OCI-LY7 (cell line): ENCODE measurements at regions of chr13 and their contacts with region 1.

Region 1: GRCh38 chr13:99501184-99501847 is at the start of gene TM9SF2:
- DNase-seq: peak; percentile 91
- H3K4me3 ChIP-seq: peak within 1 kb of the TSS; percentile 97
- H3K27ac ChIP-seq: peak within 1 kb of the TSS; percentile 73
- H3K4me1 ChIP-seq: peaks cover 58% of the 10 kb centered on the region
- CTCF ChIP-seq: no peak
- total RNA-seq, gene TM9SF2: 16.3 and 17.8 TPM in 2 replicates

Region 2: GRCh38 chr13:98570929-98571372 is 930.4 kb before region 1 on chr13:
- CTCF ChIA-PET with region 1: no interaction called
- POLR2A ChIA-PET with region 1: no interaction called
- intact Hi-C with region 1: loop called (anchors 5 kb)
- DNase-seq: peak; percentile 87
- H3K4me3 ChIP-seq: peak overlapping the region; percentile 68
- H3K27ac ChIP-seq: peak overlapping the region; percentile 99
- H3K4me1 ChIP-seq: peaks cover 81% of the 10 kb centered on the region
- CTCF ChIP-seq: no peak

Region 3: GRCh38 chr13:99200432-99201167 is 300.7 kb before region 1 on chr13 and contains the start of gene UBAC2:
- CTCF ChIA-PET with region 1: no interaction called
- POLR2A ChIA-PET with region 1: no interaction called
- intact Hi-C with region 1: loop called (anchors 10 kb)
- DNase-seq: peak; percentile 92
- H3K4me3 ChIP-seq: peak within 1 kb of the TSS; percentile 87
- H3K27ac ChIP-seq: peak within 1 kb of the TSS; percentile 82
- H3K4me1 ChIP-seq: peaks cover 50% of the 10 kb centered on the region
- CTCF ChIP-seq: no peak
- total RNA-seq, gene UBAC2: 26.8 and 33.4 TPM in 2 replicates

Region 4: GRCh38 chr13:99442273-99442895 is 58.9 kb before region 1 on chr13:
- CTCF ChIA-PET with region 1: no interaction called
- POLR2A ChIA-PET with region 1: interaction called, 4 read pairs
- intact Hi-C with region 1: loop called (anchors 5 kb)
- DNase-seq: peak; percentile 48
- H3K4me3 ChIP-seq: no peak overlapping the region
- H3K27ac ChIP-seq: no peak overlapping the region
- H3K4me1 ChIP-seq: no peaks in the 10 kb centered on the region
- CTCF ChIP-seq: peak; percentile 78

Region 5: GRCh38 chr13:99548448-99548847 is 47.1 kb after region 1 on chr13:
- CTCF ChIA-PET with region 1: no interaction called
- POLR2A ChIA-PET with region 1: no interaction called
- intact Hi-C with region 1: no loop called
- DNase-seq: no peak
- H3K4me3 ChIP-seq: no peak overlapping the region
- H3K27ac ChIP-seq: no peak overlapping the region
- H3K4me1 ChIP-seq: peaks cover under 1% of the 10 kb centered on the region
- CTCF ChIP-seq: no peak

Region 6: GRCh38 chr13:99606324-99607066 is 105.2 kb after region 1 on chr13:
- CTCF ChIA-PET with region 1: no interaction called
- POLR2A ChIA-PET with region 1: no interaction called
- intact Hi-C with region 1: loop called (anchors 5 kb)
- DNase-seq: peak; percentile 81
- H3K4me3 ChIP-seq: peak within 1 kb of the TSS; percentile 75
- H3K27ac ChIP-seq: peak within 1 kb of the TSS; percentile 78
- H3K4me1 ChIP-seq: peaks cover 21% of the 10 kb centered on the region
- CTCF ChIP-seq: no peak